ENCODE measurements at regions of chr15 and their contacts with region 1.

Region 1: GRCh38 chr15:68154923-68155559 is 50.1 kb downstream of the CALML4 start:
- DNase-seq: peak; percentile 71
- H3K4me3 ChIP-seq: no peak overlapping the region
- H3K27ac ChIP-seq: no peak overlapping the region
- H3K4me1 ChIP-seq: no peaks in the 10 kb centered on the region
- H3K27me3 ChIP-seq: no peaks in the 10 kb centered on the region
- CTCF ChIP-seq: peak; percentile 49 to 58
- POLR2A ChIP-seq: no peak

Region 2: DNA sequence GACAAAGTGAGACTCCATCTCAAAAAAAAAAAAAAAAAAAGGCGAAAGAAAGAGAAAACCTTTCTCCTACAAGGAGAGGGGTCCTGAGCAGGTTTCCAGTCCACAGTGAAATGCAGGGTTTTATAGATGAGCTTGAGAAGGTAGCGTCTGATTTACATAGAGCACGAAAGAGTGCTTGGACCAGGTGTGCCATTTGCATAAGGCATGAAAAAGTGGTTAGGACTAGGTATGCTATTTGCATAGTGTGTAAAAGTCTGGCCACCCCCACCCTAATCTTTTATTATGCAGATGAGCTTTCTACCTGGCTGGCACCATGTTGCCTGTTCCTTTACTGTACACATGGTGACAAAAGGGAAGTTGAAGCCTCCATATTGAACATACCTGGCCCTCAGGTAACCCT is 301.6 kb before region 1 on chr15:
- CTCF ChIA-PET with region 1: interaction called, 11 read pairs
- POLR2A ChIA-PET with region 1: no interaction called
- dilution Hi-C with region 1: no loop called
- intact Hi-C with region 1: no loop called
- DNase-seq: no peak
- H3K4me3 ChIP-seq: no peak overlapping the region
- H3K27ac ChIP-seq: no peak overlapping the region
- H3K4me1 ChIP-seq: no peaks in the 10 kb centered on the region
- H3K27me3 ChIP-seq: peaks cover 2% of the 10 kb centered on the region in 2 experiments
- CTCF ChIP-seq: no peak
- POLR2A ChIP-seq: no peak

Region 3: DNA sequence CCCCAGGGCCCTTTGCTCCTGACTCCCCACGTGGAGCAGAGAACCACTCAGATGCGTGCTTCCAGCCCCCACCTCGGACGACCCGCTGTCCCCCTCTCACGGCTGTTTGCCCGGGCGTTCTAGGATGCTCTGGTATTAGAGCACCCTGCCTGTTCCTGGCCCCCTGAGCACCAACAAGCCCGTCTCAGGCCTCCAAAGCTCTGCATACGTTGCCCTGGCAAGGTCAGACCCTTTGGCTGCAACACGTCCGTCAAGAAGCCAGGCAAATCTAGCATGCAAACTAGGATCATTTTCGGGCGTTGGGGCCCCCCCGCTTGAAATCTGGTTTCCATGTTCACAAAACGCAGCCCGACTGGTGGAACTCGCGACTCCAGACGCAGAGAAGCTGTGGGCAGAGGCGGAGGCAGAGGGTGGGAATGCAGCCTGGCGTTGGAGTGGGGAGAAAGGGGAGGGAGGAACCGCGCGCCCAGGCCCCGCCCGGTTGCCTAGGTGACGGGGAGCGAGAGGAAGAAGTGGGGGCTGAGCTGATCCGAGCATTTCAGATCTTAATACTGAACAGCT is 187.1 kb before region 1 on chr15:
- CTCF ChIA-PET with region 1: no interaction called
- POLR2A ChIA-PET with region 1: no interaction called
- dilution Hi-C with region 1: no loop called
- intact Hi-C with region 1: loop called (anchors 10 kb)
- DNase-seq: peak; percentile 39
- H3K4me3 ChIP-seq: no peak overlapping the region
- H3K27ac ChIP-seq: no peak overlapping the region
- H3K4me1 ChIP-seq: peaks cover 4% of the 10 kb centered on the region
- H3K27me3 ChIP-seq: peaks cover 9 to 16% of the 10 kb centered on the region in 2 experiments
- CTCF ChIP-seq: no peak
- POLR2A ChIP-seq: no peak

Region 4: DNA sequence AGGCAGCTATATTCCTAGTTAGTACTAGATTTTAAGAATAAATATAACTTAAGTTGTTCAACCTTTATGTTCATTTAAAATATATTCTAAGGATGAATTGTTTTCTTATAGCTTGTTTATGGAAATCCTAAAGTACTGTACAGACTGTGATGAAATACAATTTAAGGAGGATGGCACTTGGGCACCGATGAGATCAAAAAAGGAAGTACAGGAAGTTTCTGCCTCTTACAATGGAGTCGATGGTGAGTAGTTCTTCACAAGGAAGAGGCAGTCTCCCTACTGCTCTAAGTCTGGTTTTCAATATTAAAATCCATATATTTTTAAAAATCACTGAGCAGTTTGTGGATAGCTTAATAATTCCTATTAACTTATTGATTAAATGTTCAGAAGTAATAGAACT is 20.5 kb after region 1 on chr15:
- CTCF ChIA-PET with region 1: interaction called, 17 read pairs
- POLR2A ChIA-PET with region 1: no interaction called
- dilution Hi-C with region 1: no loop called
- intact Hi-C with region 1: no loop called
- DNase-seq: no peak
- H3K4me3 ChIP-seq: no peak overlapping the region
- H3K27ac ChIP-seq: no peak overlapping the region
- H3K4me1 ChIP-seq: no peaks in the 10 kb centered on the region
- H3K27me3 ChIP-seq: no peaks in the 10 kb centered on the region
- CTCF ChIP-seq: no peak
- POLR2A ChIP-seq: no peak